Activated T-helper 1 cell treated with anti-CD3 and anti-CD28 coated beads, Interleukin-12 subunit alpha, Interleukin-12 subunit beta, Interleukin-2, Interleukin-4 antibody, amounts not matched to agents 30 ng/mL and 10 ng/mL and 1 ng/mL, durations not matched to agents 14 hours and 24 hours and 36 hours (primary cell): ENCODE measurements at regions of chr5 and their contacts with region 1.

Region 1: DNA sequence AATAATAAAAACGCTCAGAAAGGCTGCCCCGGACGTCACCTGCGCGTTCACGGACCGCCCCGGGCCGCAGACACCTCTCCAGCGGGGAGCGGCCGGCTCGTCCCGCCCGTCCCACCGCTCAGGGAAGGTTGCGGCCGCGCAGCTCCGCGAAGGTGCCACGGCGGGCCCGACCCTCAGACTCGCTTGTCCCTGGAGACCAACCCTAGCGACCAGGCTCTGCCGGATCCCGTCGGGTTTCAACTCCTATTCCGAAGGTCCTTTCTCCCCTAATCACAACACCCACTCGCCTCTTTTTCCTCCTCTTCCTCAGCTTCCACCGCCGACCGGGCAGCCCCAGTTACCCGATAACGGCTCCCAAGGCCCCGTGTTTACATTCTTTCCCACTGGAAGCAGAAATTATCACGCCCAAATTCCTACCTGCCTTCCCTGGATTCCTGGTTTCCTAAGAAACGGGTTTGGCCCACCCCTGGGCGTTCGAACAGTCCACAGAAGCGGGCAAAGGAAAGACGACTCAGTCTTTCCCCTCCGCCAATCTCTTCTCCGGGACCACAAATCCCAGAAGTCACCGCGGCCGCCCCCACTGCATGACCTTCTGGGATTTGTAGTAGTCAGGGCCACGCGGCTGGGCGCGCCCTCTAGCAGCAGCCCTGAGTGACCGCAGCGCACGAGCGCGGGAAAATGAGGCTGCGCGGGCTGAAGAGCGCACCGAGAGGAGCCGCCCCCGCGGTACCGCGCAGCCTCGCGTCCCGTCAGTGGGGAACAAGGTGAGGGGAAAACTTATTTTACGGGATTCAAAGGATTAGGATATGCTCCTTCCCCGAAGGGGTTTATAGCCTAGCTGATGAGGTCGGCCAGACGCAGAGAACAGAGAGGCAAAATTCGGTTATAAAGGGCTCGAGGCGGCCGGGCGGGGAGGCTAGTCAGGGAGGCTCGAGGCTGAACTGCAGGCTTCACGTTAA is at the start of gene TTC33:
- DNase-seq: peak; percentile 92
- H3K4me3 Mint-ChIP-seq: no peak within 1 kb of the TSS
- H3K27ac Mint-ChIP-seq: peak within 1 kb of the TSS; percentile 41
- H3K4me1 Mint-ChIP-seq: peaks cover 21% of the 10 kb centered on the region
- H3K27me3 Mint-ChIP-seq: no peaks in the 10 kb centered on the region
- total RNA-seq, gene TTC33: 23.4 and 24.6 TPM in 2 replicates

Region 2: GRCh38 chr5:39578887-39579497 is 1176.7 kb before region 1 on chr5:
- intact Hi-C with region 1: loop called (anchors 5 kb)
- DNase-seq: no peak
- H3K4me3 Mint-ChIP-seq: no peak overlapping the region
- H3K27ac Mint-ChIP-seq: no peak overlapping the region
- H3K4me1 Mint-ChIP-seq: peaks cover 8% of the 10 kb centered on the region
- H3K27me3 Mint-ChIP-seq: peaks cover 17% of the 10 kb centered on the region

Region 3: DNA sequence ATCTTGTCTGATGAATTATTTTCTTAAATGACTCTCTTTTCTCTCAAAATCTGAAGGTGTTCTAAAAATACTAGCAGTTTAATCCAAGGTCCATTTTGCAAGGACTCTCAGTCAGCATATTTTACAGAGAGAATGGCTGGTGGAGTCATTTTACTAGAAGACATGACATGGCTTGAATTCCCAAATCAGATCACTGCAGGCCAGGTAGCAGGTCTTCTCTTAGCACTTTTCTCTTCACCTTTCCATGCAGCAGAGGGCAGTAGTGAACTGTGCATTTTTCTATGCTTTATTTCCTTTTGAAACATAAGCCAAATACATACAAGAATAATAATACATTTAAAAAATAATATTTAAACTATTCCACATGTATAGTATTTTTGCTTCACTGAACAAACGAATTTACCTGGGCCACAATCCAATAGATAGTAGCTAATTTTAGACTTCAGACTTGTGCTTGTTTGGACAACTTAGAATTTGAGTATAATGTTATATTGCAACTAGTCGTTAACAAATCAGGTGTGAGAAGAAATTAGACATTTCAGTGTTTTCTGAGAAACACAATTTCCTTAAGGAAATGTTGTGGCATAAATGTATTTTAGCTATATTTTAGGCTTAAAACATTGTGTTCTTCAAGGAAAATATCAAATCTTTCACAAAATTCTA is 1041.5 kb before region 1 on chr5:
- intact Hi-C with region 1: loop called (anchors 5 kb)
- DNase-seq: no peak
- H3K4me3 Mint-ChIP-seq: no peak overlapping the region
- H3K27ac Mint-ChIP-seq: no peak overlapping the region
- H3K4me1 Mint-ChIP-seq: no peaks in the 10 kb centered on the region
- H3K27me3 Mint-ChIP-seq: peaks cover 5% of the 10 kb centered on the region

Region 4: GRCh38 chr5:39928709-39929108 is 827.0 kb before region 1 on chr5:
- intact Hi-C with region 1: no loop called
- DNase-seq: no peak
- H3K4me3 Mint-ChIP-seq: no peak overlapping the region
- H3K27ac Mint-ChIP-seq: no peak overlapping the region
- H3K4me1 Mint-ChIP-seq: no peaks in the 10 kb centered on the region
- H3K27me3 Mint-ChIP-seq: peaks cover 6% of the 10 kb centered on the region

Region 5: GRCh38 chr5:40404613-40405012 is 351.1 kb before region 1 on chr5:
- intact Hi-C with region 1: loop called (anchors 10 kb)
- DNase-seq: peak; percentile 12
- H3K4me3 Mint-ChIP-seq: peak overlapping the region; percentile 59
- H3K27ac Mint-ChIP-seq: peak overlapping the region; percentile 99
- H3K4me1 Mint-ChIP-seq: peaks cover 86% of the 10 kb centered on the region
- H3K27me3 Mint-ChIP-seq: no peaks in the 10 kb centered on the region

Region 6: DNA sequence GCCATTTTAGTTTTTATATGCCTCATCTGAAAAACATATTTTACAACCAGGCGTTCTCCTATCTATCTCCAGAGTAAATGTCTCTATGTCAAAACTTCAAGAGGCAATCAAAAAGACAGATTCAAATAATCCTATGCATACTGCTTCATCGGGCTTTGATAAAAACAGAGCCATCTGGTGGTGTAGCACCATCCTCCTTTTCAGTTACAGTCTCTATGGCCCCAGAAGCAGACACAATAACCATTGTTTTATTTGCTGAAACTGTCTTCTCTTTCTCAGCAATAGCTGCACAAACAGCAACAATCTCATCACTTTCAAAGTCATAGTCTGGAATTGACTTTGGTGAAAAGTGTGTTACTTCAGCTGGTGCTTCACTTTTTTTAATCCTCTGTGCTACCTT is 39.7 kb before region 1 on chr5:
- intact Hi-C with region 1: no loop called
- DNase-seq: no peak
- H3K4me3 Mint-ChIP-seq: no peak overlapping the region
- H3K27ac Mint-ChIP-seq: no peak overlapping the region
- H3K4me1 Mint-ChIP-seq: peaks cover 10% of the 10 kb centered on the region
- H3K27me3 Mint-ChIP-seq: no peaks in the 10 kb centered on the region

Region 7: DNA sequence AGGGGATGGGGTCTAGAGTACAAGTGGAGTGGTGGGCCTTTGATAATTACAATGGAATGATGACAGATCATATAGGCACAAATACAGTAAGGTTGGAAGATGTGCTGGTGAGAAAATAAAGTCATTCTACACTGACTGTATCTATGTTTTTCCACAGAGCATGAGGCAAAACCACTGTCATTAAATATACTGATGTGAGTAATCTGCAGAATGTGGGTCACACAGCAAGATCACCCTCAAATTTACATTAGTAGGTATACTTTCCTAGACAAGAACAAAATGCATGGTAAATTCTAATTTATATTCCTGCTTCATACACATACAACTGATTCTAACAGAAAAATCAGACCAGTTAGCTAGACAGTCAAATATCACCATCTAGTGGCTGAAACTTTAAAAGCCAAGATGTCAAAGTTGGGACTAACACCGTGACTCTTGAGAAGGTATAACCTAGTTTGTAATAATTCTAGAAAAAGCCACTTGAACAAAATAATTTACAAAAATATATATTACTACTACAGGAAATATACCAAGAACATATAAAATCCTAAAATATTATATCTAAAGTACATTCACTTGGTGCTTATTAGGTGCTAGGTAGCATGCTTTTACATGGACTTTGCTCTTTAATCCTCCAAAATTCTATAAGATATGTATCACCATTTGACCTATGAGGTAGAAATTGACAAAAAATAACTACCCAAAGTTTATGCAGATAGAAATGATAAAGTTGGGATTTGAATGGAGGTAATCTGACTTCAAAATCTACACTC is 19.4 kb before region 1 on chr5:
- intact Hi-C with region 1: loop called (anchors 1 kb)
- DNase-seq: no peak
- H3K4me3 Mint-ChIP-seq: no peak overlapping the region
- H3K27ac Mint-ChIP-seq: no peak overlapping the region
- H3K4me1 Mint-ChIP-seq: peaks cover 22% of the 10 kb centered on the region
- H3K27me3 Mint-ChIP-seq: no peaks in the 10 kb centered on the region

Region 8: DNA sequence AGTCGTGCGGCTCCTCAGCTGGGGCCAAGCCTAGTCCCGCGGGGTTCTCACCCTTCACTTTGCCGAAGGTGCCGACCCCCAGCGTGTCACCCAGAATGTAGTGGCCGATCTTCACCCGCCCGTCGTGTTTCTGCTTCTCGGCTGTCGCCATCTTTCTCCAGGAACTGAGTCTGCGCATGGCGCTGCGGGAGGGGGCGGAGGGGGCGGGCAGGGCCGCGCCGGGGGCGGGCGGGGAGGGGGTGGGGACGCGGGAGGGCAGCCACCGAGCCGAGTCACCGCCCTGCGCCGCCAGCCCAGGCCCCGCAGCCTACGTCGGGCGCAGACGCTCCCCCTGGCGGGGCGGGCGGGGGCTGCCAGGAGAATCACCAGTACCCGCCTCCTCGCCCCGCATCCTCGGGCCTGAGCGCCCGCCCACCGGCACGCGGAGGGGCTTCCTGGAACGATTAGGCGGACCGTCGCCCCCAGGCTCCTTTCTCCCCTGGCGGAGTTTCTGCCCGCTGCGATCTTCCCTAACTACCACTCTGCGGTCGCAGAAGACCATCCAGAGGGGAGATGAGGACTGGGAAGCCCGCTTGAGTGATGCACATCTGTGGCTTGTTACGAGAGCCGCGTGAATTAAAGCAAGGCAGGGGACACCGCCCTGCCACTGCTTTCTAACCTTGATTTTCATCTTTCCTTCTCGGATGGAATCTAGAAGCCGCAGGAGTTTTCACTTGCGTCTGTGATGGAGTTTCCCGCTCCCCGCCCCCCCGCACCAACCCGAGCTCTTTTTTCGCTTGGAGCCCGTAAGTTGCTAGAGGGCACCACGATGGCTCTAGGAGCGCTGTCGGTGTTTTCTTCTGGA is 42.5 kb after region 1 on chr5 and contains the start of gene PRKAA1:
- intact Hi-C with region 1: loop called (anchors 1 kb)
- DNase-seq: peak; percentile 87
- H3K4me3 Mint-ChIP-seq: peak within 1 kb of the TSS; percentile 91
- H3K27ac Mint-ChIP-seq: peak within 1 kb of the TSS; percentile 96
- H3K4me1 Mint-ChIP-seq: peaks cover 41% of the 10 kb centered on the region
- H3K27me3 Mint-ChIP-seq: no peaks in the 10 kb centered on the region
- total RNA-seq, gene PRKAA1: 56.6 and 59.0 TPM in 2 replicates

Region 9: GRCh38 chr5:40879163-40879942 is 123.7 kb after region 1 on chr5:
- intact Hi-C with region 1: loop called (anchors 1 kb)
- DNase-seq: no peak
- H3K4me3 Mint-ChIP-seq: no peak overlapping the region
- H3K27ac Mint-ChIP-seq: no peak overlapping the region
- H3K4me1 Mint-ChIP-seq: peaks cover 5% of the 10 kb centered on the region
- H3K27me3 Mint-ChIP-seq: peaks cover 10% of the 10 kb centered on the region